Thyroid gland (tissue), 4 donors: ENCODE measurements at regions of chr5 and their contacts with region 1.

Region 1: DNA sequence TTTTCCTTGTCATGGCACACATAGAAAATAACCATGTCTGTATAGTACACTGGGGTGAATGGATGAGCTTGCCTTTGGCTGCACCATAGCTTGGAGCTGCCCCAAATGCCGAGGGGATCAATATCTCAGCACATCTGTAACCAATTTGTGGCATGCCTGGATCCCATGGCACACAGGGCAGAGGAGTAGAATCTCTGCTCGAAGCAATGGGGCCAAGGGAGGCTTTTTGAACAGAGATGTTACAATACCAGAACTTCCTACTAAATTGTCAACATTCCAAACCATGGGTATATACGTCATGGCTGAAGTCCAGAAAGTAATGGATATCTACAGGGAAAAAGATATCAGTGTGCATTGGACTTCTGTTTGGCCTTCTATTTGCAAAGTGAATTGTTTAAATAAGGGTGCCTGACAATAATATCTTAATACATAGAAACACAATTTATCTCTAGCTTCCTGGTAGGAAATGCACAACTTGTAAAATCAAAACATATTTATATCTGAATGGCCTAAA is 39.0 kb downstream of the ESM1 start:
- DNase-seq: no peak
- H3K4me3 ChIP-seq: no peak overlapping the region
- H3K27ac ChIP-seq: no peak overlapping the region
- H3K4me1 ChIP-seq: no peaks in the 10 kb centered on the region
- H3K27me3 ChIP-seq: no peaks in the 10 kb centered on the region
- CTCF ChIP-seq: no peak
- POLR2A ChIP-seq: no peak

Region 2: GRCh38 chr5:55146543-55147151 is 200.3 kb after region 1 on chr5:
- intact Hi-C with region 1: loop called (anchors 5 kb)
- DNase-seq: peak; percentile 79 to 83
- H3K4me3 ChIP-seq: no peak overlapping the region
- H3K27ac ChIP-seq: no peak overlapping the region
- H3K4me1 ChIP-seq: no peaks in the 10 kb centered on the region
- H3K27me3 ChIP-seq: no peaks in the 10 kb centered on the region
- CTCF ChIP-seq: peak; percentile 75 to 94 (median 86)
- POLR2A ChIP-seq: no peak